Activated CD4-positive, alpha-beta T cell treated with anti-CD3 and anti-CD28 coated beads, Interleukin-2, amount 10 ng/mL, durations not matched to agents 24 days and 14 days (primary cell): ENCODE measurements at regions of chr3 and their contacts with region 1.

Region 1: GRCh38 chr3:182837855-182838454 is 44.7 kb downstream of the ATP11B start:
- DNase-seq: no peak
- H3K4me3 Mint-ChIP-seq: no peak overlapping the region
- H3K27ac Mint-ChIP-seq: no peak overlapping the region
- H3K4me1 Mint-ChIP-seq: peaks cover 6% of the 10 kb centered on the region
- H3K27me3 Mint-ChIP-seq: no peaks in the 10 kb centered on the region

Region 2: GRCh38 chr3:182544542-182544941 is 293.4 kb before region 1 on chr3:
- intact Hi-C with region 1: no loop called
- DNase-seq: peak; percentile 45
- H3K4me3 Mint-ChIP-seq: no peak overlapping the region
- H3K27ac Mint-ChIP-seq: no peak overlapping the region
- H3K4me1 Mint-ChIP-seq: no peaks in the 10 kb centered on the region
- H3K27me3 Mint-ChIP-seq: no peaks in the 10 kb centered on the region

Region 3: DNA sequence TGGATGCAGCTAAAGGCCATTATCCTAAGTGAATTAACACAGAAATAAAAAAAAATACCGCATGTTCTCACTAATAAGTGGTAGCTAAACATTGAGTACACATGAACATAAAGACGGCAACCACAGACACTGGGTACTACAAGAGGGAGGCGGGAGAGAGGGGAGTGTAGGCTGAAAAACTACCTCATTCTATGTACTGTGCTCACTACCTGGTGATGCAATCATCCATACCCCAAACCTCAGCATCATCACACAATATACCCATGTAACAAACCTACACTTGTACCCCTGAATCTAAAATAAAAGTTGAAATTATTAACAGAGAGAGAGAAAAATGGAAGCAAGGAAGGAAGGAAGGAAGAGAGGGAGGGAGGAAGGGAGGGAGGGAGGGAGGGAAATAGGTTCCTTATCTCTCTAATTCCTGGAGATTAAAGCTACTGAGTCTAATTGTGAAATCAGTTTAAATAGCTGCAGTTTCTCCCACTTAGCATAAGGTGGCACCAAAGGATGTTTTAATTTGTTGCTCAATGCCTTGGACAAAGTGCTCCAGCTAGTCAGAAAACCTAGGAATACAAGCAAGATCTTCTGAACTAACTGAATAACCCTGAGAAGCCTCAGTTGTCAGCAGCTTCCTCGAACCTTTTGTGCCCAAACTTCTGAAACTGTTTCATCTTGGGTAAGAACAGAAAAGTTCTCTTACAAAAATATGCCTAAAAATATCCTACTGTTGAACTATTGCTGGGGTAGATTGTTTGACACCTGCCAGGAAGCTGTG is 124.0 kb before region 1 on chr3:
- intact Hi-C with region 1: loop called (anchors 1 kb)
- DNase-seq: peak; percentile 68
- H3K4me3 Mint-ChIP-seq: no peak overlapping the region
- H3K27ac Mint-ChIP-seq: peak overlapping the region; percentile 56
- H3K4me1 Mint-ChIP-seq: peaks cover 15% of the 10 kb centered on the region
- H3K27me3 Mint-ChIP-seq: peaks cover 4% of the 10 kb centered on the region

Region 4: GRCh38 chr3:182886497-182886896 is 48.5 kb after region 1 on chr3:
- intact Hi-C with region 1: no loop called
- DNase-seq: no peak
- H3K4me3 Mint-ChIP-seq: no peak overlapping the region
- H3K27ac Mint-ChIP-seq: no peak overlapping the region
- H3K4me1 Mint-ChIP-seq: no peaks in the 10 kb centered on the region
- H3K27me3 Mint-ChIP-seq: no peaks in the 10 kb centered on the region